CD4-positive, alpha-beta T cell (primary cell): ENCODE measurements at regions of chr9 and their contacts with region 1.

Region 1: DNA sequence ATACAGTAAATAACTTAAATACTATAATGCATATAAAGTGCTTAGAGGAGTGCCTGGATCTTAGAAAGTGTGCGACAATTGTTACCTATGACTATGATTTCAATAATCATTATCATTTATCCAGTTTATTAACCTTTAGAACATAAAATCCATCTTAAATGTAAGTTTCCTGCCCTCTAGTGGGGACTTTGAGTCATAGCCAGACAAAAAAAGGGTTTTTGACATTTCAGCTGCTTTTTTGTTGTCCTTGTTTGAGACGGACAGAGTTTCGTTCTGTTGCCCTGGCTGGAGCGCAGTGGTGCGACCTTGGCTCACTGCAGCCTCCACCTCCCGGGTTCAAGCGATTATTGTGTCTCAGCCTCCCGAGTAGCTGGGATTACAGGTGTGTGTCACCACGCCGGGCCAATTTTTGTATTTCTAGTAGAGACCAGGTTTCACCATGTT is 9.7 kb upstream of the C9orf152 start:
- DNase-seq: peak in 3 of 14 experiments; percentile 22 to 48 (median 45)
- ATAC-seq: no peak
- H3K4me3 ChIP-seq: no peak overlapping the region
- H3K4me3 Mint-ChIP-seq: no peak overlapping the region
- H3K27ac ChIP-seq: no peak overlapping the region
- H3K27ac Mint-ChIP-seq: no peak overlapping the region
- H3K4me1 ChIP-seq: peaks cover 3% of the 10 kb centered on the region
- H3K4me1 Mint-ChIP-seq: no peaks in the 10 kb centered on the region
- H3K27me3 ChIP-seq: no peaks in the 10 kb centered on the region
- H3K27me3 Mint-ChIP-seq: peaks cover 6% of the 10 kb centered on the region
- CTCF ChIP-seq: peak; percentile 81

Region 2: GRCh38 chr9:109244157-109245132 is 973.2 kb before region 1 on chr9:
- CTCF ChIA-PET with region 1: no interaction called
- POLR2A ChIA-PET with region 1: no interaction called
- intact Hi-C with region 1: loop called in 1 of 2 experiments (anchors 5 kb)
- DNase-seq: peak; percentile 32 to 77 (median 54)
- ATAC-seq: peak; percentile 79
- H3K4me3 ChIP-seq: no peak overlapping the region
- H3K4me3 Mint-ChIP-seq: no peak overlapping the region
- H3K27ac ChIP-seq: no peak overlapping the region
- H3K27ac Mint-ChIP-seq: no peak overlapping the region
- H3K4me1 ChIP-seq: no peaks in the 10 kb centered on the region
- H3K4me1 Mint-ChIP-seq: no peaks in the 10 kb centered on the region
- H3K27me3 ChIP-seq: peaks cover 5 to 8% of the 10 kb centered on the region in 2 experiments
- H3K27me3 Mint-ChIP-seq: peaks cover 35% of the 10 kb centered on the region
- CTCF ChIP-seq: peak; percentile 95

Region 3: GRCh38 chr9:109574068-109574882 is 643.4 kb before region 1 on chr9:
- CTCF ChIA-PET with region 1: interaction called, 3 read pairs
- POLR2A ChIA-PET with region 1: no interaction called
- intact Hi-C with region 1: loop called (anchors 5 kb)
- DNase-seq: peak in 4 of 14 experiments; percentile 5 to 20 (median 16)
- ATAC-seq: no peak
- H3K4me3 ChIP-seq: no peak overlapping the region
- H3K4me3 Mint-ChIP-seq: no peak overlapping the region
- H3K27ac ChIP-seq: no peak overlapping the region
- H3K27ac Mint-ChIP-seq: no peak overlapping the region
- H3K4me1 ChIP-seq: no peaks in the 10 kb centered on the region
- H3K4me1 Mint-ChIP-seq: no peaks in the 10 kb centered on the region
- H3K27me3 ChIP-seq: no peaks in the 10 kb centered on the region
- H3K27me3 Mint-ChIP-seq: peaks cover 7% of the 10 kb centered on the region
- CTCF ChIP-seq: peak; percentile 44

Region 4: GRCh38 chr9:109893241-109893640 is 324.4 kb before region 1 on chr9:
- CTCF ChIA-PET with region 1: no interaction called
- POLR2A ChIA-PET with region 1: no interaction called
- intact Hi-C with region 1: no loop called
- DNase-seq: no peak
- ATAC-seq: no peak
- H3K4me3 ChIP-seq: no peak overlapping the region
- H3K4me3 Mint-ChIP-seq: no peak overlapping the region
- H3K27ac ChIP-seq: no peak overlapping the region
- H3K27ac Mint-ChIP-seq: no peak overlapping the region
- H3K4me1 ChIP-seq: peaks cover 4% of the 10 kb centered on the region
- H3K4me1 Mint-ChIP-seq: no peaks in the 10 kb centered on the region
- H3K27me3 ChIP-seq: no peaks in the 10 kb centered on the region
- H3K27me3 Mint-ChIP-seq: no peaks in the 10 kb centered on the region
- CTCF ChIP-seq: no peak

Region 5: GRCh38 chr9:109903515-109904138 is 314.1 kb before region 1 on chr9:
- CTCF ChIA-PET with region 1: no interaction called
- POLR2A ChIA-PET with region 1: no interaction called
- intact Hi-C with region 1: loop called (anchors 2 kb)
- DNase-seq: peak; percentile 27 to 82 (median 48)
- ATAC-seq: peak; percentile 67
- H3K4me3 ChIP-seq: no peak overlapping the region
- H3K4me3 Mint-ChIP-seq: no peak overlapping the region
- H3K27ac ChIP-seq: no peak overlapping the region
- H3K27ac Mint-ChIP-seq: no peak overlapping the region
- H3K4me1 ChIP-seq: no peaks in the 10 kb centered on the region
- H3K4me1 Mint-ChIP-seq: no peaks in the 10 kb centered on the region
- H3K27me3 ChIP-seq: no peaks in the 10 kb centered on the region
- H3K27me3 Mint-ChIP-seq: peaks cover 4% of the 10 kb centered on the region
- CTCF ChIP-seq: peak; percentile 85

Region 6: GRCh38 chr9:110183208-110184145 is 34.2 kb before region 1 on chr9:
- CTCF ChIA-PET with region 1: no interaction called
- POLR2A ChIA-PET with region 1: no interaction called
- intact Hi-C with region 1: loop called in 1 of 2 experiments (anchors 1 kb)
- DNase-seq: peak in 13 of 14 experiments; percentile 5 to 70 (median 29)
- ATAC-seq: peak; percentile 58
- H3K4me3 ChIP-seq: no peak overlapping the region
- H3K4me3 Mint-ChIP-seq: no peak overlapping the region
- H3K27ac ChIP-seq: no peak overlapping the region
- H3K27ac Mint-ChIP-seq: no peak overlapping the region
- H3K4me1 ChIP-seq: no peaks in the 10 kb centered on the region
- H3K4me1 Mint-ChIP-seq: peaks cover 6% of the 10 kb centered on the region
- H3K27me3 ChIP-seq: no peaks in the 10 kb centered on the region
- H3K27me3 Mint-ChIP-seq: peaks cover 5% of the 10 kb centered on the region
- CTCF ChIP-seq: peak; percentile 82

Region 7: DNA sequence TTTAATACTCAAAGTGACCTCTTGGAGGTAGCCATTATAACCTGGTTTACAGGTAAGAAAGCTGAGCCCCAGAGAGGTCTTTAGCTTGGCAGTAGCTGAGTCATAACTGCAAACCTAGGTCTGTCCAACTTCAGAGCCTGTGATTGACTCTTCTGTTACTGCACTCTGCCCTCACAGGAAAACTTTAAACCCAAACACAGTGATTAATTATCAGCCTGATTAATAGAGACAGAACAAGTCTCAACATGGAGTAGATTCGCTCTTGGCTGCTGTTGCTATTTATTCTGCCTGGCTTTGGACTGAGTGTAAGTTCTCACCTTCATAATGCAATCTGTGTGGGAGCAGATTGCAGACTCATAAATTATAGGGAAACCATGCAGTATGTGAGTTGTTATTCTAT is 66.1 kb after region 1 on chr9:
- CTCF ChIA-PET with region 1: no interaction called
- POLR2A ChIA-PET with region 1: no interaction called
- intact Hi-C with region 1: no loop called
- DNase-seq: no peak
- ATAC-seq: no peak
- H3K4me3 ChIP-seq: no peak overlapping the region
- H3K4me3 Mint-ChIP-seq: no peak overlapping the region
- H3K27ac ChIP-seq: no peak overlapping the region
- H3K27ac Mint-ChIP-seq: no peak overlapping the region
- H3K4me1 ChIP-seq: no peaks in the 10 kb centered on the region
- H3K4me1 Mint-ChIP-seq: no peaks in the 10 kb centered on the region
- H3K27me3 ChIP-seq: peaks cover 3 to 4% of the 10 kb centered on the region in 2 experiments
- H3K27me3 Mint-ChIP-seq: peaks cover 19% of the 10 kb centered on the region
- CTCF ChIP-seq: no peak